Activated CD4-positive, alpha-beta T cell treated with anti-CD3 and anti-CD28 coated beads, Interleukin-2, amount 10 ng/mL, durations not matched to agents 24 days and 14 days (primary cell): ENCODE measurements at regions of chr2 and their contacts with region 1.

Region 1: DNA sequence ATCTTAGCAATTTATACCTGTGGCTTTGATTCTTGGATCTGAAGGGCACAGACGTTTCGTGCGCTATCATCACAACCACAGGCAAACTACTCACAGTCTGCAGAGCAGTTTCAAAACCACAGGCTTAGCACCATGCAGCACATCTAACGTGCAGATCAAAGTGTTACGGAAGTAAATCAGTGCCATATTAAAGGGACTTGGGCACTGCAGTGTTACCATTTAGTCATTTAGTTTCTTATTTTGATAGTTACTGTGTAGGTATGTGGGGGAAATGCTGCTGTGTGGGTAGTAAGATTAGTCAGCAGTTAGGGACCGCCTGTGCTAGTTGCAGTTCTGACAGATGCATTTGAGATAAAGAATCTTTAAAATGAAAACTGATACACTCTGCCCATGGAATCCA is 384.0 kb downstream of the NBAS start:
- DNase-seq: peak; percentile 89
- H3K4me3 Mint-ChIP-seq: peak overlapping the region; percentile 39
- H3K27ac Mint-ChIP-seq: peak overlapping the region; percentile 35
- H3K4me1 Mint-ChIP-seq: peaks cover 36% of the 10 kb centered on the region
- H3K27me3 Mint-ChIP-seq: peaks cover 20% of the 10 kb centered on the region

Region 2: DNA sequence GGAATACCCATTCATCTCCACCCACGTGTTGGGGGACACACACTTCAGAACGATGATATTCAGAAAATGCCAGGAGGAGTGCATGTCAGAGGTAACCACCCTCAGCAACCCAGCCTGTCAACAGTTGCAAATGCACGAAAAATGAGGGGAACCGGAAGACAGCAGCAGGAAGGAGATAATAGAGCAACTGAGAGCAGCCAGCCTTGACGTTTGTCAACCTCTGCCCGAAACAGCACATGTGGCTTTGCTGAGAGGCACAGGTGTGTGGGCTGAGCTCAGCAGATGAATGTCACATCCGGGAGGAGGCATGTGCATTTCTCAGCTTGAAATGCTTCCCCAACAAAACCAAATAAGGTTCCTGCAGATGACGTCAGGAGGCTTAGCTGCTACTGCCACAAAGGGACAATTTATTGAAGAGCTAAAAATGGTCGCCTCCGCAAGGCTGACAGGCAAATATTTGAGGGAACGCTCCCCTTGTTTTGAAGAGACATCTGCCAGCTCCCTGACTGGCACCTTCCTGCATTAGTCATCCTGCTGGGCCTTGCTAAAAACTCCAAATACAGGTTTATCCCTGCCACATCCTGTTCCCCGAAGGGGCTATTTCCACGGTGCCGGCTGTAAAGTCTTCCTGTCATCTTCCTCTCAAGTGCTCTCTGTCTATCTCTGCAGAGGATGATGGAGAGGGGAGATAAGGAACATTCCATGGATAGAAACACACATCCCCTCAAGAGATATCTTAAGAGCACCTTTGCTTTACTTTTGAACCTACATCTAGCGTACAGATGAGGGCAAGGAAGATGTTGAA is 34.8 kb before region 1 on chr2:
- intact Hi-C with region 1: loop called (anchors 1 kb)
- DNase-seq: peak; percentile 90
- H3K4me3 Mint-ChIP-seq: peak overlapping the region; percentile 45
- H3K27ac Mint-ChIP-seq: peak overlapping the region; percentile 90
- H3K4me1 Mint-ChIP-seq: peaks cover 23% of the 10 kb centered on the region
- H3K27me3 Mint-ChIP-seq: no peaks in the 10 kb centered on the region

Region 3: GRCh38 chr2:15195818-15196217 is 18.7 kb after region 1 on chr2:
- intact Hi-C with region 1: no loop called
- DNase-seq: no peak
- H3K4me3 Mint-ChIP-seq: no peak overlapping the region
- H3K27ac Mint-ChIP-seq: no peak overlapping the region
- H3K4me1 Mint-ChIP-seq: peaks cover 4% of the 10 kb centered on the region
- H3K27me3 Mint-ChIP-seq: no peaks in the 10 kb centered on the region

Region 4: GRCh38 chr2:15223887-15224286 is 46.8 kb after region 1 on chr2:
- intact Hi-C with region 1: loop called (anchors 5 kb)
- DNase-seq: no peak
- H3K4me3 Mint-ChIP-seq: no peak overlapping the region
- H3K27ac Mint-ChIP-seq: no peak overlapping the region
- H3K4me1 Mint-ChIP-seq: no peaks in the 10 kb centered on the region
- H3K27me3 Mint-ChIP-seq: no peaks in the 10 kb centered on the region

Region 5: DNA sequence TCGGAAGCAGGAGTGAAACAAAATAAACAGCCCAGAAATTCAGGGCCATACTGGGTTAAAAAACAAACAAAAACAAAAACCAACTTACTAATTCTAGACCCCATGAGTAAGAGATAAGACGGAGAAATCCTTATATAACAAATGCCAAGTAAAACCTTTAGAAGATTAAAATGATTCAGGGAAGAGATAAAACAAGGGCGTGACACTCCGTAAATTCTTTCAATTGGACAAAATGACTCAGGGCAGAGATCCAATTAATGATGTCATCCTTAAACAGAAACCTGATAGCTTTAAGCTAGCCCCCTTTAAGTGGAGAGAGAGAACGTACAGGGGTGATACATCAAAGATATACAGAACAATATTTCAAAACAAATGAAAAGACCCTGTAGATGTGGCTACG is 66.7 kb after region 1 on chr2:
- intact Hi-C with region 1: no loop called
- DNase-seq: no peak
- H3K4me3 Mint-ChIP-seq: no peak overlapping the region
- H3K27ac Mint-ChIP-seq: no peak overlapping the region
- H3K4me1 Mint-ChIP-seq: peaks cover 8% of the 10 kb centered on the region
- H3K27me3 Mint-ChIP-seq: no peaks in the 10 kb centered on the region

Region 6: DNA sequence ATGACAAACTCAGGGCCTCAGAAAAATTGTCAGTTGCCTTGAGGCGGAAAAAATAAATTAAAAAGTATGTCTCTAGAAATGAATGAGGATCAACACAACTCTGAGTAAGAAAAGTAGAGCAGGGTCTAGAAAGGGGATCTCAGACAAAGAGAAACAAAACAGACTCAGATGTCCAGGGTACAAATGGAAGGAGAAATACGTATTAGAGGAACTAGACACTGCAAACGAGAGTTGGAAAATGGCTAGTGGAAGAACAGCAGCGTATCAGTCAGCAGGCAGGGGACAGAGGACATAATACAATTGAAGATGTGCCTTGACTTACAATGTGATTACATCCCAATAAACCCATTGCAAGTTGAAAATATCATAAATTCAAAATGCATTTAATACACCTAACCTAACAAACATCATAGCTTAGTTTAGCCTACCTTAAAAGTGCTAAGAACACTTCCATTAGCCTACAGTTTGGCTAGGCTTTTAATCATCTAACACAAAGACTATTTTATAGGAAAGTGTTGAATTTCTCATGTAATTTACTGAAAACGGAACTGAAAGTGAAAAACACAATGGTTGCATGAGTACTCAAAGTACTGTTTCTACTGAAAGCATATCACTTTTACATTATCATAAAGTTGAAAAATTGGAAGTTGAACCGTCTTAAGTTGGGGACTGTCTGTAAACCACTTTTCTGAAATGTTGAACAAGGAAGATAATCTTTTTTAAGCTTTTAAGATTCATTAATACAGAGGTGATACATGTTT is 201.2 kb after region 1 on chr2:
- intact Hi-C with region 1: loop called (anchors 5 kb)
- DNase-seq: no peak
- H3K4me3 Mint-ChIP-seq: peak overlapping the region; percentile 8
- H3K27ac Mint-ChIP-seq: no peak overlapping the region
- H3K4me1 Mint-ChIP-seq: peaks cover 8% of the 10 kb centered on the region
- H3K27me3 Mint-ChIP-seq: no peaks in the 10 kb centered on the region

Region 7: DNA sequence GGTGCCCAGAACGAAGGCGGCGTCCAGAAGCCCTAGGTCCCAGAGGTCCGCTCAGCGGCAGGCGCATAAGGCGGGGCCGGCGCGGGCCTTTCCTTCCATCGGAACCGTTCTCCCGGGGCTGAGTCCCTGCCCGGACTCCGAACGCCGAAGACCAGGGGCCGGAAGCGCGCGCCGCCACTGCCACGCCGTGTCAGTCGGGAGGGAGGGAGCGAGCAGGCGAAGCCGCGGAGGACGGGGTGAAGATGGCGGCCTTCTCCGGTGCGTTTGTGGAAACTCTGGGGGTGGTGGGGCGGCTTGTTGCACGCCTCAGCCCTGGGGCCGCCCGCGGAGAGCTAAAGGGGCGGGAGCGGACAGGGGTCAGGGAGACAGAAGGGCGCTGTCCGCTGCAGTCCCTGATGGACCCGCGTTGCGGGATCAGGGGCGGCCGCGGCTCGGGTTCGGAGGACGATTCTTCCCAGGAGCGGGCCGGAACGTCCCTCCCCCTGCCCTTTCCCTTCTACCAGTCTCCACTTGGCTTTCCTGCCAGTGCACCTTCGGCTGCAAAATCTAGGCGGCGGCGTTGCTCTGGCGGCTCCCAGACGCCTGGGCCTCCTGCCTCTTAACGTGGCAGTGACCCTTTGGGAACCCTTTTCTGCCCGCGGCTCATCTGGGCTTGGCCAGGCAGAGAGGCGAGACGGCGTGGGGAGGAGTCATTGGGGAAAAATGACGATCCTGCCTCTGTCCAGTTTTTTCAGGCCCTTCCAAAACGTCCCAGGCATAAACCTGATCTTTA is 414.8 kb after region 1 on chr2 and contains the start of gene DDX1:
- intact Hi-C with region 1: loop called (anchors 10 kb)
- DNase-seq: peak; percentile 96
- H3K4me3 Mint-ChIP-seq: peak within 1 kb of the TSS; percentile 89
- H3K27ac Mint-ChIP-seq: peak within 1 kb of the TSS; percentile 89
- H3K4me1 Mint-ChIP-seq: peaks cover 26% of the 10 kb centered on the region
- H3K27me3 Mint-ChIP-seq: no peaks in the 10 kb centered on the region
- total RNA-seq, gene DDX1: 116 TPM in 2 replicates